OCI-LY7 (cell line): ENCODE measurements at regions of chr19 and their contacts with region 1.

Region 1: GRCh38 chr19:10403137-10404021 is at the start of gene CDC37:
- DNase-seq: peak; percentile 98
- H3K4me3 ChIP-seq: peak within 1 kb of the TSS; percentile 83
- H3K27ac ChIP-seq: peak within 1 kb of the TSS; percentile 100
- H3K4me1 ChIP-seq: peaks cover 79% of the 10 kb centered on the region
- CTCF ChIP-seq: no peak
- total RNA-seq, gene CDC37: 332 and 345 TPM in 2 replicates

Region 2: DNA sequence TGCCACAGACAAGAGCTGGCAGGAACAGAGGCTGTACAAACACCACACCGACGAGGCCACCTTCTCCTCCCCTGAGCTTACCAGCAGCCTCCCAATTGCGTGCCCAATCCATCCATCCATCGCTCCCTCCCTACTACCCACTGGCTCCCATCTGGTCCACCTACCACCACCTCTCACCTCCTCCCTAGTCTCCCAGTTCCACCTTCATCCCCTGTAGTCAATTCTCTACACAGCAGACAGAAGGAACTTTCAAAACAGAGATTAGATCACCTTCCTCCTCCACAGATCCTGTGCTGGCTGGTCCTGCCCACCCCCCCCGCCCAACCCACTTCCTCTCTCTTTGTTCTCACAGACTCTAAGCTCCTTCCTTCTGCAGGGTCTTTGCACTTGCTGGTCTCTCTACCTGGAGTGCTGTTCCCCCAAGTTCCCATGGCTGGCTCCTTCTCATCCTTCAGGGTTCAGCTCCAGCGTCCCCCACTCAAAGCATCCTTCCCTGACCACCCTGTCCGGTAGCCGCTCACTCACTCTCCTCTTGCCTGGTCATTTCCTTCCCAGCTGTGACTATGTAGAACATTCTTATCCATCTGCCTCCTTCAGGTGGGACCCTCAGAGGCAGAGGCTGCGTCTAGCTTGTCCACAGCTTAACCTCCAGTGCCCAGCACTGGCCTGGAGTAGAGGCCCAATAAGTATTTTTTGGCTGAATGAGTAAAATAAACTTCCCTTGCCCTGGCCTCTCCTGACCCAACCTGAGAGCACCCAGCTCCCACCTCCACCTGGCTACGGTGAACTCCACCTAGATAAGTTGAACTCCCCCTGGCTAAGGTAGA is 545.2 kb before region 1 on chr19:
- CTCF ChIA-PET with region 1: no interaction called
- POLR2A ChIA-PET with region 1: no interaction called
- intact Hi-C with region 1: no loop called
- DNase-seq: peak; percentile 16
- H3K4me3 ChIP-seq: no peak overlapping the region
- H3K27ac ChIP-seq: no peak overlapping the region
- H3K4me1 ChIP-seq: peaks cover 4% of the 10 kb centered on the region
- CTCF ChIP-seq: no peak

Region 3: DNA sequence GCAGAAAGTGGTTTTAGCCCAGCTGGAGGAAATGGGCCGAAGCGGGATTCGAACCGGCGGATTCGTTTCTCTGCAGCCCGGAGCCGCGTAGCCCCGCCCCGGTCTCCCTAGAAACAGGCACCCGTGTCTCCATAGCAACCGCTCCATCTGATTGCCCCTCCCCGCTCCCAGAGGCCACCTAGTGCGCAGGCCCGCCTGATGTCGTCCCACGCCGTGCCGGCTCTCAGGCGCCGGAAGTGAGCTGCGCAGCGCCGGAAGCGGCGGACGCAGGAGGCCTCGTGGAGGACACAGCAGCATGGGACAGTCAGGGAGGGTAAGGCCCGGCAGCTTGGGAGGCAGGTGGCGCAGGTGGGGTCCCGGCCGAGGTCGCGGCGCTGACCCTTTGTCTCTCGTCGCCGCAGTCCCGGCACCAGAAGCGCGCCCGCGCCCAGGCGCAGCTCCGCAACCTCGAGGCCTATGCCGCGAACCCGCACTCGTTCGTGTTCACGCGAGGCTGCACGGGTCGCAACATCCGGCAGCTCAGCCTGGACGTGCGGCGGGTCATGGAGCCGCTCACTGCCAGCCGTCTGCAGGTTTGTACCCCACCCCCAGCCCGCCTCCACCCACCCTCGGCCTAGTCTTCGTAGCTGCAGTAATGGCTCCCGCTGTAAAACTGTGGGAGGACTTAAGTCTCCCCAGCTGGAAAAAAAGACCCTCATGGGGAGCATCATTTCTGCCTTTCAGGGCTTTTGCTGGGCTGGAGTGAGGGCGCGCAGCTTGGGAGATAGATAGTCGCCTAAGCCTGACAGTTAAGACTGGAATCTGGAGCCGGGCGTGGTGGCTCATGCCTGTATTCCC is 297.1 kb before region 1 on chr19 and contains the start of gene PPAN:
- CTCF ChIA-PET with region 1: no interaction called
- POLR2A ChIA-PET with region 1: no interaction called
- intact Hi-C with region 1: loop called (anchors 10 kb)
- DNase-seq: peak; percentile 100
- H3K4me3 ChIP-seq: peak within 1 kb of the TSS; percentile 99
- H3K27ac ChIP-seq: peak within 1 kb of the TSS; percentile 84
- H3K4me1 ChIP-seq: peaks cover 59% of the 10 kb centered on the region
- CTCF ChIP-seq: no peak
- total RNA-seq, gene PPAN: 77.1 and 85.8 TPM in 2 replicates

Region 4: DNA sequence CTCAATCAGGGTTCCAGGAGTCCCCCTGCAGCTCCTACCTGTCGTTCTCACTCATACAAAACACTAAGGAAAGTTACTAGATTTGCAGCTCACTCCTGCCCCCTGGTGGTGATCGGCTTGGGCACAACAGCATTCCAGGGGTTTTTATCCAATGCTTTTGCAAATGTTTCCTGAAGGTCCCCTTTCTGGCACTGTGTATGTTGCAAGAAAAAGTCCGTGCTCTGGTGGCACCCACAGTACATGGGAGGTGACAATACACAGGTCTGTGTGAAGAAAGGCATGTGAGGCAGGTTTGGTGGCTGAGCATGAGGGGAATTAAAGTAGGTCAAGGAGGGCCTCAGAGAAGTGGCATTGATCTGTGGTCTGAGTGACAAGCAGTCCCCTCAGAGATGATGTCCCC is 14.4 kb before region 1 on chr19:
- CTCF ChIA-PET with region 1: no interaction called
- POLR2A ChIA-PET with region 1: no interaction called
- intact Hi-C with region 1: no loop called
- DNase-seq: peak; percentile 79
- H3K4me3 ChIP-seq: no peak overlapping the region
- H3K27ac ChIP-seq: no peak overlapping the region
- H3K4me1 ChIP-seq: peaks cover 2% of the 10 kb centered on the region
- CTCF ChIP-seq: peak; percentile 99

Region 5: DNA sequence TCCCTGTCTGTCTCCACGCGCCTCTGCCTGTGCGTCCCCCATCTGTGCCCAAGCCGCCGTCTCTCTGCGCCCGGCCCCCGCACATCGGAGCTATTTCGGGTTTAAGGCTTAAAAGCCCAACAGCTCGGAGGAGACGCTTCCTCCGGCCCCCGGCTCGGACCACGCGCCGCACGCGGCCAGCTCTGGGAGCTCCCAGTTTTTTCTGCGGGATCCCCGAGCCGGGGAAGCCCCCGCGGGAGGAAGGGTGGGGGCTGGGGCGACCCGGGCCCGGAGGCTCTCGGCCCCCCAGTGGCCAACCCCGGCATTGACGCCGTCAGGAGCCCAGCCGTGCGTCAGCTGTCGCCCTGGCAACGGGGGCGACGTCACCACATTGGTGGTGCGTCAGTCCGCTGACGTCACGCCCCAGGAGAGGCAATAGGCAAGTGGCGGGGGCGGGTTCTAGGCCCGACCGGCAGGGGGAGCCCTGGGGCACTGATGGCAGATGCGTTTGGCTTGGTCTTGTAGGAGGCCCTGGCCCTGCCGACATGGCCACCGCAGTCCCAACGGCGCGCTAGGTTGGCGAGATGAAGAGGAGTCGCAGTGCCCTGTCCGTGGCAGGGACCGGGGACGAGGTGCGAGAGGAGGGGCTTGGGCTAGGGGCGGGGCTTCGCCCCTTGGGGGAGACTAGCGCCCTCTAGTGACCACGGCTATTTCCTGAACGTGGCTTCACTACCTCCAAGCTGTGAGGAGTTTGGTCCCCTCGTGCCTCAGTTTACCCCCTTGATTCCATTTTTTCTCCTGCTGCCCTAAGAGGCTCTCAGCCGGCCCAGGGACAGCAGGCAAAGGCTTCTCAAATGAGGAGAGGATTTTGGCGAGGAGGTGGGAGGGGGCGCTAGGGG is 13.2 kb after region 1 on chr19:
- CTCF ChIA-PET with region 1: interaction called, 27 read pairs
- POLR2A ChIA-PET with region 1: interaction called, 60 read pairs
- intact Hi-C with region 1: loop called (anchors 1 kb)
- DNase-seq: peak; percentile 97
- H3K4me3 ChIP-seq: peak overlapping the region; percentile 76
- H3K27ac ChIP-seq: peak overlapping the region; percentile 100
- H3K4me1 ChIP-seq: peaks cover 62% of the 10 kb centered on the region
- CTCF ChIP-seq: peak; percentile 94

Region 6: DNA sequence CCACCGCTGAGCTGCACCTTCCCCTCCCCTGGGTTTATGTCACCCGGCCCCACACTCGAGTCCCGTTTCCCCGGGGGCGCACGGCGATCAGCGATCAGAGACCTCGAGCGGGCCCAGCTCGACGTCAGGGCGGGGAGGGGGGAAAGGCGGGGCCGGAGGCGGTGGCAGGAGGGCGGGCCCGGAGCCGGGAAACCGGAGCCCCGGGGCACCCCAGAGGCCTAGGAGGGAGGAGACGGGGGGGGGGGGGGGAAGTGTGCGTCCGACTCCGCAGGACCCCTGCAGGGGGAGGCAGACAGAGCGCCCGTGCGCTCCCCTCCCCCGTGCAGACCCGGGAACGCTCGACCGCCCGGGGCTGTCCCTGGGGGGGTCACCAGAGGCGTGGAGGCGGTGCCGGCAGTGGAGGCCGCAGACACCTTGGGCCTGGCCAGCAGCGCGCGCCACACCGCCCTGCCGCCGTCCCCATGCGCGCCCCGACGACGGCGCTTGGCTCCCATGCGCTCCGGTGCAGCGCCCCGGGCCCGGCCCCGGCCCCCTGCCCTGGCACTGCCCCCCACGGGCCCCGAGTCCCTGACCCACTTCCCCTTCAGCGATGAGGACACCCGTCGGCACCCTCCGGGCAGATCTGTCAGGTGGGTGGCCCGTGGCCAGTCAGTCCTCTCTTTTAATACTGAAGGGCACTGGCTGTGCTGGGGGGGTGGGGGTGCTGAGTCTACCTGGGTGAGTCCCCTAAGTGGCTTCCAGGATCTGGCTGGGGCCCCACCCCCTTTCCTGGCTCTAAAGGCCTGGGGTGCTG is 28.8 kb after region 1 on chr19:
- CTCF ChIA-PET with region 1: interaction called, 25 read pairs
- POLR2A ChIA-PET with region 1: interaction called, 4 read pairs
- intact Hi-C with region 1: loop called (anchors 1 kb)
- DNase-seq: no peak
- H3K4me3 ChIP-seq: no peak overlapping the region
- H3K27ac ChIP-seq: no peak overlapping the region
- H3K4me1 ChIP-seq: peaks cover 73% of the 10 kb centered on the region
- CTCF ChIP-seq: no peak

Region 7: GRCh38 chr19:10653715-10654492 is 250.5 kb after region 1 on chr19 and contains the start of gene ILF3:
- CTCF ChIA-PET with region 1: no interaction called
- POLR2A ChIA-PET with region 1: no interaction called
- intact Hi-C with region 1: loop called (anchors 10 kb)
- DNase-seq: peak; percentile 100
- H3K4me3 ChIP-seq: peak within 1 kb of the TSS; percentile 100
- H3K27ac ChIP-seq: peak within 1 kb of the TSS; percentile 88
- H3K4me1 ChIP-seq: peaks cover 41% of the 10 kb centered on the region
- CTCF ChIP-seq: no peak
- total RNA-seq, gene ILF3: 308 and 347 TPM in 2 replicates